ENCODE measurements at regions of chrX and their contacts with region 1.

Region 1: DNA sequence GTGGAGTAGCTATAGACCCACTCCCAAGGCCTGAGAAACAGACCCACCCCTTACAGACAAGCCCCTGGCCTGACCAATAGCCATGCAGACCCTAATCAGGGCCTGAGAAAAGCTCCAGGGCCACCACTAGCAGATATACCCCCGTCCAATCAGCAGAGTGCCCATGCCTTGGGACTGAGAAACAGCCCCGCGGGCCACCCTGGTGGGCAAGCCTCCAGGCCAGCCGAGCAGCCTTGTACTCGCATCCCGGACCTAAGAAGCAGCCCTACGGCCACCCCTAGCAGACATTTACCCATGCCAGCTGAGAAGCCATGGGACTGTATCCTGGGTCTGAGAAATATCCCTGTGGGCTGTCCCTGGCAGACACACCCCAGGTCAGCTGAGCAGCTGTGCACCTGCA is 436.5 kb downstream of the SMARCA1 start:
- DNase-seq: no peak
- H3K4me3 ChIP-seq: no peak overlapping the region
- H3K27ac ChIP-seq: no peak overlapping the region
- H3K4me1 ChIP-seq: no peaks in the 10 kb centered on the region
- H3K27me3 ChIP-seq: peaks cover 0 to 4% of the 10 kb centered on the region in 2 donors
- CTCF ChIP-seq: no peak
- POLR2A ChIP-seq: no peak

Region 2: GRCh38 chrX:129099207-129099606 is 12.4 kb after region 1 on chrX:
- intact Hi-C with region 1: no loop called
- DNase-seq: no peak
- H3K4me3 ChIP-seq: no peak overlapping the region
- H3K27ac ChIP-seq: no peak overlapping the region
- H3K4me1 ChIP-seq: no peaks in the 10 kb centered on the region
- H3K27me3 ChIP-seq: peaks cover 0 to 23% of the 10 kb centered on the region in 2 donors
- CTCF ChIP-seq: no peak
- POLR2A ChIP-seq: no peak

Region 3: DNA sequence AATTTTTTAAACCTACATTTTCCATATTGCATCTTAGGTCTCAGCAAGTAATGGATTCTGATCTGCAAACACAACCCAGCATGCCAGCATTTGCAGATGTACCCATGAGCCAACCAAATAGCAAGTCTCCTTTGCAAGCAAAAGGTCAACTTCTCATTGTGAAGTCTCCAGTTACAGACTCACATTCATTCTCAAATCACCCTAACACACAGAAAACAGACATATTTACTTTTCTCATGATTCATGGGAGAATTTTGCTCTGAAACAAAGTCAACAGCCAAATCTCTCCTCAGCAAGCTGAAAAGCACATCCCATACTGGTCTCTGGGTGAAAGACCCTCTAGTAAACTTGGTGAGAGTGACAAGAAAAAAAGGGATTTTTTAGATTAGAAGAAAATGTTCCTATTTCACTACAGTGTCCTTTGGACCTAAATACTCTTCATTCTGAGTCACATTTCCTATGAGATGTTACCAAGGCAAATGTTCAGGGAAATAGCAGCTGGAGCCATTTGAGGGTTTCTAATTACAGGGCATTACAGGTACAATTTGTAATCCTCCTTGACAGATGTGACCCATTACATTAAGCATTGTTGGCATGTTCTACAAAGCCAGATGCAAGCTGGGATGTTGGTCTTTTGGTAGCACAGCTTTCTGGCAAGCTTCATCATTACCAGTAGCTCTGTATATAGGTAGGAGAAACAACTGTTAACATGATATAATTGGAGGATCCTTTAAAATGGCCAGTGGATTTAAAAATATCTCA is 53.2 kb after region 1 on chrX:
- intact Hi-C with region 1: loop called (anchors 5 kb)
- DNase-seq: no peak
- H3K4me3 ChIP-seq: no peak overlapping the region
- H3K27ac ChIP-seq: no peak overlapping the region
- H3K4me1 ChIP-seq: no peaks in the 10 kb centered on the region
- H3K27me3 ChIP-seq: peaks cover 0 to 13% of the 10 kb centered on the region in 2 donors
- CTCF ChIP-seq: no peak
- POLR2A ChIP-seq: no peak